HAP-1 (cell line): ENCODE measurements at regions of chr5 and their contacts with region 1.

Region 1: GRCh38 chr5:39217365-39218281 is 1.7 kb downstream of the FYB1 start:
- DNase-seq: peak; percentile 57 to 72
- H3K4me3 ChIP-seq: no peak overlapping the region
- H3K4me1 ChIP-seq: no peaks in the 10 kb centered on the region
- H3K27me3 ChIP-seq: peaks cover 3% of the 10 kb centered on the region

Region 2: DNA sequence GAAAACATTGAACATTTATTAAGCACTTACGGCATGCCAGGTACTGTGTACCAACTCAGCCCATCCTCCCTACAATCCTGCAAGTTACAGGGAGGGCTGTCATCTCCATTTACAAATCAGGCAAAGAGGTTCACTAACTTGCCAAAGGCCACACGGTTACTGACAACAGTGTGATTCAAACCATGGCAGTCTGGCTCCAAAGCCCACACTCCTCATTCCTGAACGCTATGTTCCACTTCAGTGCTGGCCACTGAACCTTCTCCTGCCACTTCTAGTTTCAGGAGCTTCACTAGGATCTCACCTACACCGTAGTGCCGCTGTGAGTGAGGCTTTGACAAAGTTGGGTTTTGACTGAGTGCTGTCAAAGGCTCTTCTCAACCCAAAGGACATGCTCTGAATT is 654.0 kb before region 1 on chr5:
- in situ Hi-C with region 1: no loop called
- DNase-seq: no peak
- H3K4me3 ChIP-seq: no peak overlapping the region
- H3K4me1 ChIP-seq: no peaks in the 10 kb centered on the region
- H3K27me3 ChIP-seq: no peaks in the 10 kb centered on the region

Region 3: DNA sequence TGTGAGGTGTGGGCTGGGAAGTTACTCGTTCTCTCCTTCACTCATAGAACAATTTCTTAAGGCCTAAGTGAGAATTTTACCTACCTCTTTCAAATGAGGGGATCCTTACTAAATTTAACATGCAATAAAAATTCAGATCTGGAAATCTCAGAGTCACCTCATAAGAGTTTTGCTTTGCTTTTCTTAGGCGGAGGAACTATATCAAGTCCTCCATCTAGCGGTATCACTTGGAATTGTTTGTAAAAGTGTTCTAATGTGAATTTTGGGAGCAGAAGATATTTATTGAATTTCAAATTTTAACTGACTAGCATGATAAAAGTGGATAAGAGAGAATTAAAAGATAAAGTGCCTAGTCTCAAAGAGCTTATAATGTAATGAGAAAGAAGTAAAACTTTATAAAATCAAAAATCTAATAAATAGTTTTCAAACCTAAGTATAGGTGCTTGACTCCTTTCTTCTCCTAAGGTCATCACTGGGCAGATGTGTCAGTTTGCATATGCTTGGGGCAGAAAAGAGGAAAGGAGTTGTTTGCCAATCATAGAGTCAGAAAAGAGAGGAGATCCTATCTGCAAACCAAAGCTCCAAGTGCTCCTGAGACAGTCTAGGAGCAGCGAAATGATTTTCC is 352.9 kb after region 1 on chr5:
- in situ Hi-C with region 1: loop called (anchors 25 kb)
- DNase-seq: peak in 1 of 2 experiments; percentile 44
- H3K4me3 ChIP-seq: no peak overlapping the region
- H3K4me1 ChIP-seq: no peaks in the 10 kb centered on the region
- H3K27me3 ChIP-seq: peaks cover 15% of the 10 kb centered on the region